ENCODE measurements at regions of chr1 and their contacts with region 1.

Region 1: DNA sequence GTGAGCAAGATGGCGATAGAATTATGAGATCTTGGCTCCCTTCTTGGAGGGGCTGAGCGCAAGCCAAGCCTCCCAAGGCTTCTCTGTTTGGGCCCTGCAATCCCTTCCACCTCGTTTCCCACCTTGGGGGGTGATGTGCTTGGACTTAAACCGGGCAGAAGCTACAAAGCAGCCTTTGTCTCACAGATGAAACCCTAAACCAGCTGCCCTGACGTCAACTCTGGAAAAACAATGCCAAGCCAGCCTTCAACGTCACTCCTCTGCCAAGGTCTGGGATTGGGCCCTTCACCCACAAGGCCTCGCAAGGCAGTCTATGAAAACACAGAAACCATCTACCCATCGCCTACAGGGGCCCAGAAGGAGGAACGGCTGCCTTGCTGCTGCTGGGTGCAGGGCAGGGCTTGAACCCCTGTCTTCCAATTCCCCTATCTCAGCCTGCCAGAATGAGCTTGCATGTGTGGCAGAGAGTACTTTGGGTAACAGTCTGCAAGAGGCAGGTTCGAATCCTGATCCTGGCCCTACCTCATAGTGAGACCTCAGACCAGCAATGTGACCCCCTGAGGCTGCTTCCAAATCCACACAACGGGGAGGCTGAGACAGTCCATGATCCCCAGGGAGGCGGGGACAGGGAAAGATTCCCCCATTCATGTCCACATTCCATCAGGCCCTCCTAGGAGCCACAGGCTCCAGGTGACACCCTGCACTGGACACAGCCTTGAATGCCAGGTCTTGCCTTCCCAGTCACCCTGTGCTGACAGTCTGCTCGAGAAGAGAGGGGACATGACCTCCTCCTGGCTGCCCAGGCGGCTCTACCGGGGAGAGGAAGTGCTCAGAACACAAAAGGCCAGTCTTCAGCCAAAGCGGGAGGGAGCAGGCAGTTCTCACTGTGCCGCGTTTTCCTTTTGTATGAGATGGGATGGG is 15.0 kb downstream of the IFFO2 start:
- DNase-seq: no peak
- ATAC-seq: no peak
- H3K4me3 Mint-ChIP-seq: no peak overlapping the region
- H3K27ac Mint-ChIP-seq: no peak overlapping the region
- H3K4me1 Mint-ChIP-seq: peaks cover 56% of the 10 kb centered on the region
- H3K27me3 Mint-ChIP-seq: no peaks in the 10 kb centered on the region
- CTCF ChIP-seq: no peak

Region 2: DNA sequence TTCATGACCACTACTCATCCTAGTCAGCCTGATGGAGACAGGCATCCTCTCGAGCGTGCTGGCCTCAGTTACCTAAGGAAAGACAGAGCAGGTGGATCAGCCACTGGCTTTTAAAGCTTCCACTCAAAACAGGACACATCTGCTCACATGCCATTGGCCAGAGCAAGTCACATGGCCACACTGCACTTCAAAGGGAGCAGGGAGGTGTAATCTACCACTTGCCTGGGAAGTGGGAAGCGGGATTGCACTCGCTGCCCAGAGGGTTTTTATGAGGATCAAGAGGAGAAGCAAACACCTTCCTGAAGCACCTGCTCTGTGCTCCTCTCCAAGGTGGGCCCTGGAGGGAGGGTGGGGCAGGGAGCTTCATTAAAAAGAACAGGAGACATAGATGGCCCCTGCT is 190.1 kb before region 1 on chr1:
- CTCF ChIA-PET with region 1: no interaction called
- POLR2A ChIA-PET with region 1: no interaction called
- intact Hi-C with region 1: no loop called
- DNase-seq: no peak
- ATAC-seq: no peak
- H3K4me3 Mint-ChIP-seq: no peak overlapping the region
- H3K27ac Mint-ChIP-seq: no peak overlapping the region
- H3K4me1 Mint-ChIP-seq: no peaks in the 10 kb centered on the region
- H3K27me3 Mint-ChIP-seq: peaks cover 23% of the 10 kb centered on the region
- CTCF ChIP-seq: no peak

Region 3: DNA sequence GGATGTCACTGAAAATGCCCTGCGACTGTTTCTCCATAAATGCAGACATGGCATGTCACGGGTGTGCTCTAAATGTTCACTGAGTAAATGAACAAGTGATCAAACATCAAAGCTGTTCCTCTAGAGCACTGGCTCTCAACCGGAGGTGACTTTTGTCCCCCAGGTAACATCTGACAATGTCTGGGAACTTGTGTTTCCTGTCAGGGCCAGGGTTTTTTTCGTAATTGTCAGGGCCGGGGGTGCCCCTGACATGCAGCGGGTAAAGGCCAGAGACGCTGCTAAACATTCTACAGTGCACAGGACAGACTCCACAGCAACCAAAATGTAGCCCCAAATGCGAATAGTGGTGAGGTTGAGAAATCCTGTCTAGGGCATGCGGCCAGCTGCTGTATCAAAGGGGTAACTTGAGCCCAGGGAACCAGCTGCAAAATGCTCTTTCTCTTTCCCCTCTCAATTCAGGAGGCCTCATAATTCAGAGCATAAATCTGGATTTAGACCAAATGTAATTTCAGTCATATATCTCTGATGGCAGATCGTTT is 41.1 kb before region 1 on chr1:
- CTCF ChIA-PET with region 1: no interaction called
- POLR2A ChIA-PET with region 1: no interaction called
- intact Hi-C with region 1: no loop called
- DNase-seq: peak; percentile 36
- ATAC-seq: no peak
- H3K4me3 Mint-ChIP-seq: no peak overlapping the region
- H3K27ac Mint-ChIP-seq: no peak overlapping the region
- H3K4me1 Mint-ChIP-seq: peaks cover 22% of the 10 kb centered on the region
- H3K27me3 Mint-ChIP-seq: no peaks in the 10 kb centered on the region
- CTCF ChIP-seq: no peak

Region 4: GRCh38 chr1:18956369-18957135 is 15.1 kb after region 1 on chr1 and contains the start of gene IFFO2:
- CTCF ChIA-PET with region 1: interaction called, 5 read pairs
- POLR2A ChIA-PET with region 1: interaction called, 10 read pairs
- intact Hi-C with region 1: no loop called
- DNase-seq: peak; percentile 98
- ATAC-seq: peak; percentile 88
- H3K4me3 Mint-ChIP-seq: peak within 1 kb of the TSS; percentile 82
- H3K27ac Mint-ChIP-seq: peak within 1 kb of the TSS; percentile 85
- H3K4me1 Mint-ChIP-seq: peaks cover 55% of the 10 kb centered on the region
- H3K27me3 Mint-ChIP-seq: no peaks in the 10 kb centered on the region
- CTCF ChIP-seq: no peak
- total RNA-seq, gene IFFO2: 23.7 to 26.4 TPM

Measured in activated CD8-positive, alpha-beta T cell treated with anti-CD3 and anti-CD28 coated beads for 36 hours (primary cell).